Mammary epithelial cell (primary cell): ENCODE measurements at regions of chr4 and their contacts with region 1.

Region 1: DNA sequence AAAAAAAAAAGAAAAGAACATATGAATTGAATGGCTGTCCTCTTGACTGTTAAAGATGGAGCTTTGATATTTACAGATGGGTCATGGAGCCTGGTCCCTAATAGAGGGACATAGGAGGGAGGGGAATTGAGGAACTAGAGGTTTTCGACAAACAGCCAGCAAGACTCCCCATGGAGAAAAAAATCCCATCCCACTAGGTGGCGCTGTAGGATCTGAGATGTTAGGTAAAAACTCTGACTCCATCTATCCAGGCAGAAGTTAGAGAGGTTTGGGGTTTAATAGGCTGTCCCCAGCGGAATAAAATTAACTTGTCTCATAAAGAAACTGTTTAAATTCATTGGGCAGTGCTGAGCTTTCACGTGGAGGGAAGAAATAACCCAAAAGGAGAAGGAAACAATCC is 45.9 kb downstream of the HMGB2 start:
- DNase-seq: peak; percentile 52
- H3K4me3 ChIP-seq: no peak overlapping the region
- H3K27ac ChIP-seq: no peak overlapping the region
- H3K4me1 ChIP-seq: peaks cover 9% of the 10 kb centered on the region
- H3K27me3 ChIP-seq: no peaks in the 10 kb centered on the region
- CTCF ChIP-seq: peak; percentile 54 to 67

Region 2: DNA sequence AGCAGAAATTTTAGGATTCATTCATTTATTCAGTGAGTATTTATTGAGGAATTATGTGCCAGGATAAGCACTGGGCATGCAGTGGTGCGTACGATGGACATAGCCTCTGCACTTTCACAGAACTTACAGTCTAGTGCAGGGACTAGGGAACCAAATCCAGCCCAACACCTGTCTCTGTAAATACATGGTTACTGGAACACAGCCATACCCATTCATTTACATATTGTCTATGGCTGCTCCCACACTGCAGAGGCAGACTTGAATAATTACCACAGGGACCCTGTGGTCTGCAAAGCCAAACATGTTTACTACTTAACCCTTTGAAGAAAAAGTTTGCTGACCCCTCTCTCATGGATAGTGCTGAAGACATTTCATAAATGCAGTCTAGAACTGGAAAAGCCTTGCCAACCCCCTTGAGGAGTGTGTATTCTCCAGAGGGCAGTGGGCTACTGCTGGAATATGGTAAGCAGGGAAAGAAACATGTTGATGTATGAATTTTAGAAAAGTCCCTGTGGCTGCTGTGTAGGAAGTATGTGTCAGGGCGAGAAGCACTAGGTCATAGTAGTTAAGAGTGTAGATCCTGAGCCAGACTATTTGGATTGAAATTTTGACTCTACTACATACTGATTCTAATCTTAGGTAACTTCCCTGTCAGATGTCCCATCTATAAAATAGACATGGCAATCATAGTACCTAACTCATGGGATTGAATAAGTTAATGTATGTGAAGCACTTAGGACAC is 44.2 kb before region 1 on chr4:
- CTCF ChIA-PET with region 1: no interaction called
- dilution Hi-C with region 1: no loop called
- in situ Hi-C with region 1: no loop called
- intact Hi-C with region 1: no loop called
- DNase-seq: no peak
- H3K4me3 ChIP-seq: no peak overlapping the region
- H3K27ac ChIP-seq: no peak overlapping the region
- H3K4me1 ChIP-seq: peaks cover 21% of the 10 kb centered on the region
- H3K27me3 ChIP-seq: no peaks in the 10 kb centered on the region
- CTCF ChIP-seq: no peak

Region 3: DNA sequence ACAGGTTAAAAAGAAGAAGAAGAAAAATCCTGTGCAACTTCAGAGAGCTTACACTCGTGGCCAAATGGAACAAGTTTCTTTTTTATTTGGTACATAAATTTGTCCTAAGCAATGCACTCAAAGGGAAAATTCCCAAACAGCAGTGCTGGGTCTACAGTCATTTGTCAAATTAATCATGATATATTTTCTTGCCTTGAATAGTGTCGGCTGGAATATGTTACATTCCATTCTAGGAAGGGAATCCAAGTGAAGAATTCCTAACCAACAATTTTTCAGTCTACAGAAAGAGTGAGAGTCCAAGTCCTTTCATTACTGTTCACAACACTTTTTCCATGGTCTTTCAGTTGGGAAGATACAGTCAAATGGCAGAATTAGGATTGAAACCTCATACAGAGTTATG is 177.8 kb after region 1 on chr4:
- CTCF ChIA-PET with region 1: no interaction called
- dilution Hi-C with region 1: no loop called
- in situ Hi-C with region 1: no loop called
- intact Hi-C with region 1: no loop called
- DNase-seq: no peak
- H3K4me3 ChIP-seq: no peak overlapping the region
- H3K27ac ChIP-seq: no peak overlapping the region
- H3K4me1 ChIP-seq: no peaks in the 10 kb centered on the region
- H3K27me3 ChIP-seq: no peaks in the 10 kb centered on the region
- CTCF ChIP-seq: no peak

Region 4: GRCh38 chr4:173494013-173494970 is 206.0 kb after region 1 on chr4:
- CTCF ChIA-PET with region 1: no interaction called
- dilution Hi-C with region 1: no loop called
- in situ Hi-C with region 1: no loop called
- intact Hi-C with region 1: loop called (anchors 1 kb)
- DNase-seq: peak; percentile 66
- H3K4me3 ChIP-seq: peak overlapping the region; percentile 18 to 43 (median 42)
- H3K27ac ChIP-seq: no peak overlapping the region
- H3K4me1 ChIP-seq: no peaks in the 10 kb centered on the region
- H3K27me3 ChIP-seq: no peaks in the 10 kb centered on the region
- CTCF ChIP-seq: peak; percentile 78 to 88